ENCODE measurements at regions of chr6 and their contacts with region 1.

Region 1: DNA sequence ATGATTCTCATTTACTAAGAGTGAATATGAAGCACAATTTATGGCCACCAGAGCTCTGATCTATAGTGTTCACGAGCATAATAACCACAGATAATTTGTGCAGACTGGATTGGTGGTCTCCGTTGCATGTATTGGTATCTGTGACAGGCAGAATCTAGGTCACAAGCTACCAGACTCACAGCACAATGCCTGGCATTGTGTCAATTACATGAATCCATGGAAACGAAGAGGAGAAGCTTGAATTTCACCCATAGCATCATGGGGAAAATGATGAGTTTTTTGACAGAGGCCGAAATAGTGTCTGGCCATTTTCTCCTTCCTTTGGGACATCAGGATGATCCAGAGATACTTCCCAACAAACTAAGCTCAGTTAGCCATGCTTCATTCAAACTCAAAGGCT is 52.3 kb upstream of the TMEM170B start:
- DNase-seq: no peak
- H3K4me3 ChIP-seq: no peak overlapping the region
- H3K27ac ChIP-seq: no peak overlapping the region
- H3K4me1 ChIP-seq: no peaks in the 10 kb centered on the region
- H3K27me3 ChIP-seq: no peaks in the 10 kb centered on the region

Region 2: GRCh38 chr6:11161031-11161966 is 324.0 kb before region 1 on chr6:
- in situ Hi-C with region 1: loop called (anchors 10 kb)
- DNase-seq: peak; percentile 48
- H3K4me3 ChIP-seq: no peak overlapping the region
- H3K27ac ChIP-seq: no peak overlapping the region
- H3K4me1 ChIP-seq: peaks cover 9% of the 10 kb centered on the region
- H3K27me3 ChIP-seq: no peaks in the 10 kb centered on the region